GM12878 (cell line): ENCODE measurements at regions of chr9 and their contacts with region 1.

Region 1: DNA sequence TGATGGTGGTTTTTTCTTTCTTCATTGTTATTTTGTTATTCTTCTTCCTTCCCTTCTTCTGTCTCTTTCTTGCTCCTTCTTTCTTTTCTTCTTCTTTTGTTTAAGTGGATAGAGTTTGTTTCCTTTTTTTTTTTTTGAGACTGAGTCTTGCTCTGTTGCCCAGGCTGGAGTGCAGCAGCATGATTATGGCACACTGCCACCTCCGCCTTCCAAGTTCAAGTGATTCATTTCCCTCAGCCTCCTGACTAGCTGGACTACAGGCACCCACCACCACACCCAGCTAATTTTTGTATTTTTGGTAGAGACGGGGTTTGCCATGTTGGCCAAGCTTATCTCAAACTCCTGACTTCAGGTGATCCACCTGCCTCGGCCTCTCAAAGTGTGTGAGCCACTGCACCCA is 40.3 kb downstream of the JAK2 start:
- DNase-seq: no peak
- ATAC-seq: no peak
- H3K4me3 ChIP-seq: no peak overlapping the region
- H3K27ac ChIP-seq: no peak overlapping the region
- H3K4me1 ChIP-seq: no peaks in the 10 kb centered on the region
- H3K27me3 ChIP-seq: no peaks in the 10 kb centered on the region
- CTCF ChIP-seq: no peak
- EP300 ChIP-seq: no peak
- POLR2A ChIP-seq: no peak
- RAD21 ChIP-seq: no peak

Region 2: DNA sequence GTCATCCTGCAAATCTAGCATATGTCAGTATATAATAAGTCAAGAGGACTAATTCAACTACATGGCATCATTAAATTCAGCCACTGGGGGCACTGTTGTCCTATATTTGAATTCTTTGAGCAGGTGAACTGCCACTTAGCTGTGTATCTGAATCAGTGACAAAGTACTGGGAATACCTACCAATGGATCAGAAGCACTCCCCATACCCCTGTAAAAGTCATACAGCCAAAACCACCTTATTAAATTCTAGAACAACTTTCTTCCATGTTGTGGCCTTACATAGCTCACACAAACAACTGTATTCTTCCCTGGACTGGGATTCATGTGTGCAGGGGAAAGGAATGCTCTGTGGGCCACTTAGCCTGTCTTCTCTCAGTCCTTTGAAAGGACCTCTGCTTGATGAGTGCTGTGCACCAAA is 420.7 kb before region 1 on chr9:
- CTCF ChIA-PET with region 1: no interaction called
- POLR2A ChIA-PET with region 1: no interaction called
- RAD21 ChIA-PET with region 1: no interaction called
- SMC1A ChIA-PET with region 1: no interaction called
- in situ Hi-C with region 1: no loop called
- intact Hi-C with region 1: no loop called
- DNase-seq: peak; percentile 50
- ATAC-seq: peak; percentile 97
- H3K4me3 ChIP-seq: no peak overlapping the region
- H3K27ac ChIP-seq: no peak overlapping the region
- H3K4me1 ChIP-seq: no peaks in the 10 kb centered on the region
- H3K27me3 ChIP-seq: no peaks in the 10 kb centered on the region
- CTCF ChIP-seq: peak; percentile 50 to 75 (median 62)
- EP300 ChIP-seq: no peak
- POLR2A ChIP-seq: no peak
- RAD21 ChIP-seq: peak; percentile 77

Region 3: DNA sequence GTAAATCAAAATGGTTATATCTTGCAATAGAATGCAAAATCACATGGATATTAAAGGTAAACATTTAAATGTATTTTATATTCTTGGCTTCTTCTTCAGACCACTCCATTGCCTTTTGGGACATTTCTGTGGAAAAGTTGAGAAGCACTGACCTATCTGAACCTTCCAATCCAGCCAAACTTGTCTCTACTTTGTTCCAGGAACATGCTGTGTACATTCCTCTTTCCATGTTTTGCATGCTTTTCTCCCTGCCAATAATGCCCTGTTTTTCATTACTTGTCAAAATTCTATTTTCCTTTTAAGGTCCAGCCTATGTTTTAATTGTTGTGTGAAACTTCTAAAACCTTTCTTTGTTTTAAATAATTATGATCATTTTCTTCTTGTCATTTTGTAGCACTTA is 12.0 kb before region 1 on chr9:
- CTCF ChIA-PET with region 1: interaction called, 4 read pairs
- POLR2A ChIA-PET with region 1: no interaction called
- RAD21 ChIA-PET with region 1: no interaction called
- SMC1A ChIA-PET with region 1: interaction called, 13 read pairs
- in situ Hi-C with region 1: no loop called
- intact Hi-C with region 1: no loop called
- DNase-seq: no peak
- ATAC-seq: no peak
- H3K4me3 ChIP-seq: no peak overlapping the region
- H3K27ac ChIP-seq: no peak overlapping the region
- H3K4me1 ChIP-seq: no peaks in the 10 kb centered on the region
- H3K27me3 ChIP-seq: no peaks in the 10 kb centered on the region
- CTCF ChIP-seq: no peak
- EP300 ChIP-seq: no peak
- POLR2A ChIP-seq: no peak
- RAD21 ChIP-seq: no peak

Region 4: GRCh38 chr9:5178126-5178805 is 152.8 kb after region 1 on chr9:
- CTCF ChIA-PET with region 1: no interaction called
- POLR2A ChIA-PET with region 1: no interaction called
- RAD21 ChIA-PET with region 1: no interaction called
- SMC1A ChIA-PET with region 1: no interaction called
- in situ Hi-C with region 1: no loop called
- intact Hi-C with region 1: no loop called
- DNase-seq: no peak
- ATAC-seq: peak; percentile 21; the same call in 2 of the 3 replicates
- H3K4me3 ChIP-seq: no peak overlapping the region
- H3K27ac ChIP-seq: no peak overlapping the region
- H3K4me1 ChIP-seq: no peaks in the 10 kb centered on the region
- H3K27me3 ChIP-seq: no peaks in the 10 kb centered on the region
- CTCF ChIP-seq: no peak
- EP300 ChIP-seq: no peak
- POLR2A ChIP-seq: no peak
- RAD21 ChIP-seq: no peak